CD8-positive, alpha-beta memory T cell (primary cell): ENCODE measurements at regions of chr7 and their contacts with region 1.

Region 1: GRCh38 chr7:101223528-101223927 is 5.6 kb downstream of the ZNHIT1 start:
- DNase-seq: no peak
- H3K4me3 ChIP-seq: no peak overlapping the region
- H3K4me3 Mint-ChIP-seq: no peak overlapping the region
- H3K27ac ChIP-seq: no peak overlapping the region
- H3K27ac Mint-ChIP-seq: no peak overlapping the region
- H3K4me1 ChIP-seq: peaks cover 11% of the 10 kb centered on the region
- H3K4me1 Mint-ChIP-seq: peaks cover 20 to 36% (median 26%) of the 10 kb centered on the region in 3 donors
- H3K27me3 ChIP-seq: no peaks in the 10 kb centered on the region
- H3K27me3 Mint-ChIP-seq: no peaks in the 10 kb centered on the region

Region 2: GRCh38 chr7:100983451-100984187 is 239.9 kb before region 1 on chr7:
- CTCF ChIA-PET with region 1: no interaction called
- POLR2A ChIA-PET with region 1: no interaction called
- DNase-seq: no peak
- H3K4me3 ChIP-seq: no peak overlapping the region
- H3K4me3 Mint-ChIP-seq: no peak overlapping the region
- H3K27ac ChIP-seq: no peak overlapping the region
- H3K27ac Mint-ChIP-seq: no peak overlapping the region
- H3K4me1 ChIP-seq: no peaks in the 10 kb centered on the region
- H3K4me1 Mint-ChIP-seq: no peaks in the 10 kb centered on the region
- H3K27me3 ChIP-seq: no peaks in the 10 kb centered on the region
- H3K27me3 Mint-ChIP-seq: peaks cover 0 to 4% of the 10 kb centered on the region in 2 donors

Region 3: GRCh38 chr7:101244375-101245146 is 21.0 kb after region 1 on chr7 and contains the start of gene FIS1:
- CTCF ChIA-PET with region 1: interaction called, 69 read pairs
- POLR2A ChIA-PET with region 1: interaction called, 28 read pairs
- DNase-seq: peak; percentile 91 to 95 (median 92)
- H3K4me3 ChIP-seq: peak within 1 kb of the TSS; percentile 95
- H3K4me3 Mint-ChIP-seq: peak within 1 kb of the TSS; percentile 97 to 99 (median 98)
- H3K27ac ChIP-seq: peak within 1 kb of the TSS; percentile 91
- H3K27ac Mint-ChIP-seq: peak within 1 kb of the TSS; percentile 93 to 99 (median 97)
- H3K4me1 ChIP-seq: peaks cover 27% of the 10 kb centered on the region
- H3K4me1 Mint-ChIP-seq: peaks cover 30 to 60% (median 40%) of the 10 kb centered on the region in 3 donors
- H3K27me3 ChIP-seq: no peaks in the 10 kb centered on the region
- H3K27me3 Mint-ChIP-seq: peaks cover 0 to 2% of the 10 kb centered on the region in 2 donors
- total RNA-seq, gene FIS1: 137 to 139 TPM